Activated naive CD4-positive, alpha-beta T cell treated with anti-CD3 and anti-CD28 coated beads for 36 hours (primary cell): ENCODE measurements at regions of chr1 and their contacts with region 1.

Region 1: DNA sequence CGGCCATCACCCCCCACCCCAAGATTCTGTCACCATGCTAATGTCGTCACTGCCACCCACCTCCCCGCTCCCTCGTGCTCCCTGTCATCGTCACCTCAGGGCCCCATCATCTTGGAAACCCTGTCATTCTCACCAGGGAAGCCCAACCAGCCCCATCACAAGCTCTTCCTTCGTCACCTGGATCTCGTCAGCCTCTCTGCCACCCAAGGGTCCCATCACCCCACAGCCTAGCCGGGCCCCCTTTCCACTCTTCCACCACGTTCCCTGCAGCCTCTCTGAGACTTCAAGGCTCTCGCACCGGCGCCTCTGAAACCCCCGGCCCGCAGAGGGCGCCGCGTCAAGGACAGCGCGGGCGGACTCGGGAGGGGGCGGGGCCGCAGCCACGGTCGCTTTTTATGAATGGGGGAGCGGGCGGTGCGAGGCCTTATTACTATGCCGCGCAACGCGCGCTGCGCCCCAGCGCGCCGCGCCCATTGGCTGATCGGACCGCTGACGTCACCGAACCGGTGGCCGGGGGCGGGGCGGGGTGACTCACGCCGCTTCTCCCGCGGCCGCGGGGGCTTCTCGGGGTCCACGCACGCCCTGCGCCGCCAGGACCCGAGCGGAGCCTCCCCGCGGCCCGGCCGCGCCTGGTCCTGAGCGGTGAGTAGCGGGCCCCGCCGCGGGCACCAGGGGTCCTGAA is at the start of gene GPR3:
- DNase-seq: peak; percentile 95
- H3K4me3 Mint-ChIP-seq: peak within 1 kb of the TSS; percentile 95
- H3K27ac Mint-ChIP-seq: peak within 1 kb of the TSS; percentile 75
- H3K4me1 Mint-ChIP-seq: peaks cover 19% of the 10 kb centered on the region
- H3K27me3 Mint-ChIP-seq: no peaks in the 10 kb centered on the region
- total RNA-seq, gene GPR3: 0.64 to 0.74 TPM

Region 2: GRCh38 chr1:27102707-27103491 is 289.3 kb before region 1 on chr1:
- CTCF ChIA-PET with region 1: interaction called, 3 read pairs
- intact Hi-C with region 1: loop called (anchors 2 kb)
- DNase-seq: peak; percentile 89
- H3K4me3 Mint-ChIP-seq: no peak overlapping the region
- H3K27ac Mint-ChIP-seq: no peak overlapping the region
- H3K4me1 Mint-ChIP-seq: peaks cover 12% of the 10 kb centered on the region
- H3K27me3 Mint-ChIP-seq: no peaks in the 10 kb centered on the region

Region 3: DNA sequence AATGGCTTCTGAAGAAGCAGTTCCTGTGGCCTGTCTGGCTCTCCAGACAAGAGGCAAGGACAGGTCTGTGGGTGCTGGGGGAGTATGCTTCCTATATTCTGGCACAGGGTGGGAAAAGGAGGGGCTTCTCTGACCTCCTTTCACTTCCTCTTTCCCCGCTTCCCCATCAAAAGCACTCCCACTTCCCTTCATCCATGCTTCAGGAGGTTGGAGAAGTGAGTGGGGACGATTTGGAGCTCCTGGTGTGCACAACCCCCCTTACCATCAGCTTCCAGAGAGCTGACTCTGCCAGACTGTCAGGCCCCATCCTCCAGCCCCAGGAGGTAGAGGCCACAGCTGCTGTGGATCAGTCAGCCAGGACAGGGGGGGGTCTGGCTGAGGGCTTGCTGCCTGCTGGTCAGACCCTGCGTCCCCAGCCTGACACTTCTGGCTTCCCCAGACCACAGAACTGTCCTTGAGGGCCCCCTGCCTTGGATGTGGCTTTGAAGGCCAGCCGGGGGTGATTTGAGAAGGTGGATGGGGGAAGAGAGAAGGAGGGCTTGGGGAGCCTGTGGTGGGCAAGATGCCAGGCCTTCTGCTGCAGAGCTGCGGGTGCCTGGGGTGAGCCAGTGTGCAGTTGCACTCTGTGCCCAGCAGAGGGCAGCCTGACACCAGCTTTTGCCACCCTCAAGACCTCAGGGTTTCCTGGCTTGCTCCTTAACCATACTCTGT is 91.7 kb before region 1 on chr1:
- CTCF ChIA-PET with region 1: interaction called, 176 read pairs
- intact Hi-C with region 1: loop called (anchors 1 kb)
- DNase-seq: peak; percentile 84
- H3K4me3 Mint-ChIP-seq: no peak overlapping the region
- H3K27ac Mint-ChIP-seq: no peak overlapping the region
- H3K4me1 Mint-ChIP-seq: no peaks in the 10 kb centered on the region
- H3K27me3 Mint-ChIP-seq: no peaks in the 10 kb centered on the region

Region 4: GRCh38 chr1:27332536-27333281 is 59.5 kb before region 1 on chr1:
- CTCF ChIA-PET with region 1: interaction called, 41 read pairs
- intact Hi-C with region 1: loop called (anchors 1 kb)
- DNase-seq: peak; percentile 68
- H3K4me3 Mint-ChIP-seq: no peak overlapping the region
- H3K27ac Mint-ChIP-seq: no peak overlapping the region
- H3K4me1 Mint-ChIP-seq: peaks cover 26% of the 10 kb centered on the region
- H3K27me3 Mint-ChIP-seq: no peaks in the 10 kb centered on the region

Region 5: GRCh38 chr1:27357281-27358037 is 34.8 kb before region 1 on chr1:
- CTCF ChIA-PET with region 1: interaction called, 38 read pairs
- intact Hi-C with region 1: loop called (anchors 1 kb)
- DNase-seq: peak; percentile 86
- H3K4me3 Mint-ChIP-seq: peak overlapping the region; percentile 70
- H3K27ac Mint-ChIP-seq: peak overlapping the region; percentile 78
- H3K4me1 Mint-ChIP-seq: peaks cover 38% of the 10 kb centered on the region
- H3K27me3 Mint-ChIP-seq: no peaks in the 10 kb centered on the region

Region 6: DNA sequence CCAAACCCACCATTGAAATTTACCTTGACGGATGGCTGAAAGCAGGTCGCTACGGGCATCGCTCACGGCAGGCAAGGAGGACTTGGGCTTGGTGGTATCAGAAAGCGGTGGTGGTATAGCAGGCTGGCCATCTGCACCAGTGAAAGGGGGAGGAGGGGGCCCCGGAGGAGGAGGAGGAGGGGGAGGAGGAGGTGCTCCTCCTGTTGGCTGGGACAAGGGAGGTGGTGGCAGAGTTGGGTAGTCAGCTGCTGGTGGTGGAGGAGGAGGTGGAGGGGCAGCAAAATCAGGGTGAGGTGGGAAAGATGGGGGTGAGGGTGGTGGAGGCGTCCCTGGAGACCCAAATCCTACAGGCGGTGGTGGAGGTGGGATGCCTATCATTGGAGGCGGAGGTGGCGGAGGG is 17.4 kb after region 1 on chr1:
- CTCF ChIA-PET with region 1: interaction called, 10 read pairs
- intact Hi-C with region 1: no loop called
- DNase-seq: no peak
- H3K4me3 Mint-ChIP-seq: no peak overlapping the region
- H3K27ac Mint-ChIP-seq: no peak overlapping the region
- H3K4me1 Mint-ChIP-seq: no peaks in the 10 kb centered on the region
- H3K27me3 Mint-ChIP-seq: no peaks in the 10 kb centered on the region

Region 7: GRCh38 chr1:27609210-27609555 is 216.9 kb after region 1 on chr1:
- CTCF ChIA-PET with region 1: interaction called, 12 read pairs
- intact Hi-C with region 1: loop called (anchors 1 kb)
- DNase-seq: no peak
- H3K4me3 Mint-ChIP-seq: no peak overlapping the region
- H3K27ac Mint-ChIP-seq: no peak overlapping the region
- H3K4me1 Mint-ChIP-seq: peaks cover 24% of the 10 kb centered on the region
- H3K27me3 Mint-ChIP-seq: no peaks in the 10 kb centered on the region